SK-N-SH (cell line): ENCODE measurements at regions of chr19 and their contacts with region 1.

Region 1: GRCh38 chr19:5775668-5776309 is 8.8 kb downstream of the PRR22 start:
- DNase-seq: no peak
- H3K4me3 ChIP-seq: no peak overlapping the region
- H3K27ac ChIP-seq: no peak overlapping the region
- H3K4me1 ChIP-seq: no peaks in the 10 kb centered on the region; a peak in 1 of 4 replicates
- H3K27me3 ChIP-seq: no peaks in the 10 kb centered on the region
- CTCF ChIP-seq: no peak
- EP300 ChIP-seq: no peak
- RAD21 ChIP-seq: no peak

Region 2: GRCh38 chr19:5738426-5738825 is 37.4 kb before region 1 on chr19:
- CTCF ChIA-PET with region 1: no interaction called
- POLR2A ChIA-PET with region 1: no interaction called
- DNase-seq: no peak
- H3K4me3 ChIP-seq: no peak overlapping the region
- H3K27ac ChIP-seq: no peak overlapping the region
- H3K4me1 ChIP-seq: no peaks in the 10 kb centered on the region
- H3K27me3 ChIP-seq: peaks cover 7% of the 10 kb centered on the region; the same call in 1 of the 2 replicates
- CTCF ChIP-seq: no peak
- EP300 ChIP-seq: no peak
- RAD21 ChIP-seq: no peak

Region 3: GRCh38 chr19:5790573-5791520 is 15.1 kb after region 1 on chr19 and contains the start of gene DUS3L:
- CTCF ChIA-PET with region 1: interaction called, 19 read pairs
- POLR2A ChIA-PET with region 1: interaction called, 3 read pairs
- DNase-seq: peak; percentile 97
- H3K4me3 ChIP-seq: peak within 1 kb of the TSS; percentile 73 to 97
- H3K27ac ChIP-seq: peak within 1 kb of the TSS; percentile 90 to 95
- H3K4me1 ChIP-seq: peaks cover 0 to 8% of the 10 kb centered on the region in 2 experiments; a peak in 1 of 4 replicates
- H3K27me3 ChIP-seq: no peaks in the 10 kb centered on the region
- CTCF ChIP-seq: no peak
- EP300 ChIP-seq: no peak
- RAD21 ChIP-seq: no peak
- polyA plus RNA-seq, gene DUS3L: 44.0 and 45.2 TPM in 2 replicates